ENCODE measurements at regions of chr22 and their contacts with region 1.

Region 1: DNA sequence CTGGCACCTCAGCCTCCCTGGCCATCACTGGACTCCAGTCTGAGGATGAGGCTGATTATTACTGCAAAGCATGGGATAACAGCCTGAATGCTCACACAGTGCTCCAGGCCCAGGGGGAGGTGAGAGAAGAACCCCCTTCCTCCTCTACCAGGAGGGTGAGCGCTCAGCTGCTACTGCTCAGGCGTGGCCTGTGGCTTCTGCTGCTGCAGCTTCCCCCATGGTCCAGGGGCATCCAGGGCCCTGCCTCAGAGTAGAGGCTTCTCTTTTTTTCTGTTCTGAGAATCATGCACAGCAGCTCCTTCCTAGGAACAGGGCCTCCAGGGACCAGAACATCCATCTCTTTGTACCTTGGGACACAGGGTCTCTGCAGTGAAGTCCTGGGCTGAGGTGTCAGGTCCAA is 83.1 kb downstream of the VPREB1 start:
- DNase-seq: no peak
- ATAC-seq: no peak
- H3K4me3 Mint-ChIP-seq: no peak overlapping the region
- H3K27ac Mint-ChIP-seq: no peak overlapping the region
- H3K4me1 Mint-ChIP-seq: no peaks in the 10 kb centered on the region
- H3K27me3 Mint-ChIP-seq: peaks cover 22% of the 10 kb centered on the region
- CTCF ChIP-seq: no peak

Region 2: GRCh38 chr22:22342697-22343580 is 15.2 kb after region 1 on chr22:
- CTCF ChIA-PET with region 1: interaction called, 26 read pairs
- POLR2A ChIA-PET with region 1: no interaction called
- intact Hi-C with region 1: no loop called
- DNase-seq: peak; percentile 82
- ATAC-seq: peak; percentile 81
- H3K4me3 Mint-ChIP-seq: no peak overlapping the region
- H3K27ac Mint-ChIP-seq: no peak overlapping the region
- H3K4me1 Mint-ChIP-seq: no peaks in the 10 kb centered on the region
- H3K27me3 Mint-ChIP-seq: peaks cover 2% of the 10 kb centered on the region
- CTCF ChIP-seq: peak; percentile 85

Region 3: DNA sequence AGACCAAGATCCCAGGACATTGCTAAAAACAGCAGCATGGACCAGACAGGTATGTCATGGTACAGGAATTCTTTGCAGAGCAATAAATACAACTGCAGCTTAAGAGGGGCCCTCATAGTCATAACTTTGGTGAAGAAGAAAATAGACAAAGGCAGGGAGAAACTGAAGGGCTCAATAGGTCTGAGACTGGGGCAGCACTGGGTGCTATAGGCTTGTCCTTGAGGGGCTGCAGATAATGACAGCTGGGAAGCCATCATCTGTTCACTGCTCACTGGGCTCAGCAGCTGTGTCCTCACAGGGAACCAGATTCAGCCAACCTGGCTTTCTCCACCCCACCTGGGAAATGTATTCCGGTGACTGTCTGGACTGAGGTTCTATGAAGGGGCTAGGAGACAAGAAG is 112.5 kb after region 1 on chr22:
- CTCF ChIA-PET with region 1: no interaction called
- POLR2A ChIA-PET with region 1: no interaction called
- intact Hi-C with region 1: no loop called
- DNase-seq: no peak
- ATAC-seq: no peak
- H3K4me3 Mint-ChIP-seq: no peak overlapping the region
- H3K27ac Mint-ChIP-seq: no peak overlapping the region
- H3K4me1 Mint-ChIP-seq: no peaks in the 10 kb centered on the region
- H3K27me3 Mint-ChIP-seq: peaks cover 34% of the 10 kb centered on the region
- CTCF ChIP-seq: no peak